ENCODE measurements at regions of chr1 and their contacts with region 1.

Region 1: GRCh38 chr1:53238197-53239155 is at the start of gene MAGOH:
- DNase-seq: peak; percentile 95
- ATAC-seq: peak; percentile 99
- H3K4me3 ChIP-seq: peak within 1 kb of the TSS; percentile 94 to 98 (median 98)
- H3K4me3 Mint-ChIP-seq: peak within 1 kb of the TSS; percentile 99
- H3K27ac ChIP-seq: peak within 1 kb of the TSS; percentile 70 to 89
- H3K27ac Mint-ChIP-seq: peak within 1 kb of the TSS; percentile 96
- H3K4me1 ChIP-seq: peaks cover 18 to 26% of the 10 kb centered on the region in 2 donors
- H3K4me1 Mint-ChIP-seq: peaks cover 29% of the 10 kb centered on the region
- H3K27me3 ChIP-seq: no peaks in the 10 kb centered on the region
- H3K27me3 Mint-ChIP-seq: no peaks in the 10 kb centered on the region
- CTCF ChIP-seq: no peak
- total RNA-seq, gene MAGOH: 36.2 and 45.6 TPM in 2 replicates

Region 2: DNA sequence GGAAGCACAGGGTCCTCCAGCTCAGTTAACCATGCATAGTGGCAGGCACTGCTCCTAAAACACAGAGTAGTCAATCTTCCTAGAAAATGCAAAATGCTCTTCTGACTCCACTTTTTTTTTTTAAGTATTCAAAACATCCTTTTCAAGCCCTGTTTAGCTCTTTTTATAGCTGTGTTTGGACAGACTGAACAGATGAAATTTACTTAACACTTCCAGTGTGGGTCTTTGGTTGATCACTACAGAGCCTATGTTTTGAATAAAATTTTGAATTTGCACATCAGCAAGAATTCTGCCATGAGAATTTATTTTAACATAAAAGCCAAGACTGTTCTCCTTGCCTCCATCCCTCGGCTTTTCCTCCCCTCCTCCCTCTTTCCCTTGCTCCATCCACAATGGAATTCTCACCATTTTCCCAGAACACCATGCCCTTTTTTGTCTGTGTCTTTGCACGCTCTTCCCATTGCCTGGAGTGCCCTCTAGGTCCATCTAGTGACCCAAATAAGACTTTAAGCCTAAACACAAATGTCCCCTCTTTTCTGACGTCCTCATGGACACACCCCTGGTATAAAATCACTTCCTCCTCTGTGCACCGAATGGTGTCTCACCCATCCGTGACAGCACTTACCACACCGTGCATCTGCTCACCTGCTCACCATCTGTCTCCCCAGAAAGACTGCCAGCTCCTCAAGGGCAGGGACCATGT is 65.9 kb before region 1 on chr1:
- CTCF ChIA-PET with region 1: no interaction called
- POLR2A ChIA-PET with region 1: no interaction called
- intact Hi-C with region 1: no loop called
- DNase-seq: peak; percentile 66
- ATAC-seq: peak; percentile 76
- H3K4me3 ChIP-seq: no peak overlapping the region
- H3K4me3 Mint-ChIP-seq: no peak overlapping the region
- H3K27ac ChIP-seq: no peak overlapping the region
- H3K27ac Mint-ChIP-seq: peak overlapping the region; percentile 22
- H3K4me1 ChIP-seq: peaks cover 6% of the 10 kb centered on the region in 2 donors
- H3K4me1 Mint-ChIP-seq: peaks cover 14% of the 10 kb centered on the region
- H3K27me3 ChIP-seq: peaks cover 0 to 10% (median 4%) of the 10 kb centered on the region in 4 experiments
- H3K27me3 Mint-ChIP-seq: peaks cover 22% of the 10 kb centered on the region
- CTCF ChIP-seq: no peak

Region 3: DNA sequence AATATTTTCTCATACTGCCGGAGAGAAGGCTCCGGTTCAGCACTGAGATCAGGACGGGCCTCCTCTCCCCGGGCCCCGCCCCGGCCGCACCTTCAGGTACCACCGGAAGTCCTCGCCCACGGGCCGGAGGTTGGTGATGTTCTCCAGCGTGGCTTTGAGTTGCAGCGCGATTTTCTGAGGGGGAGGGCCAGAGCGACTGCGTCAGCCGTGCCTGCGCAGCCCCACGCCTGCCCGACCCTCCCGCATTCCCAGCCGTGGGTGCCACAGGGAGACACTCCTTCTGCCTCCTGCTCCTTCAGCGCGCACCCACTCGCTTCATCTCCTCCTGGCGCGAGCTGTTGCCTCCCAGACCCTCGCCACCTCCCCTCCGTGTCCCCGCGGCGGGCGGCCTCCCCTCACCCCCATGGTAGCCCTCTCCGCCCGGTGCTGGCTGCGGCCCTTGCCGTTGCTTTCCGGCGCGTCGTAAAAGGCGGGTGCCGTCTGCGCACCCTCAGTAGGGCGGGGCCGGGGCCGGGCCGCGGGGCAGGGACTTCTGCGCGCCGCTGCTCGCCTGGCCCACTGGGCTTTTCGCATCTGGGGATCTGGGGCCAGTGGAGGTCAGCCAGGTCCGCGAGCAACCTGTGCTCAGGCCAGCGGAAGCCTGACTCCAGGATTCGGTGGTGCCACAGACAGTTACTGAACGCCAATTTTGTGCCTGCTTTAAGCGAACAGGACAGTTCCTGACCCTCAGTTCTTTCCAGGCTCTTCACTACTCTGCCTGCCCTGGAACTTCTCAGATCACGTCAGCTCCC is 18.1 kb before region 1 on chr1 and contains the start of gene CZIB:
- CTCF ChIA-PET with region 1: no interaction called
- POLR2A ChIA-PET with region 1: interaction called, 4 read pairs
- intact Hi-C with region 1: loop called (anchors 1 kb)
- DNase-seq: peak; percentile 96
- ATAC-seq: peak; percentile 92
- H3K4me3 ChIP-seq: peak within 1 kb of the TSS; percentile 43 to 91 (median 66)
- H3K4me3 Mint-ChIP-seq: peak within 1 kb of the TSS; percentile 97
- H3K27ac ChIP-seq: peak within 1 kb of the TSS; percentile 85 to 87
- H3K27ac Mint-ChIP-seq: peak within 1 kb of the TSS; percentile 99
- H3K4me1 ChIP-seq: peaks cover 13 to 17% of the 10 kb centered on the region in 2 donors
- H3K4me1 Mint-ChIP-seq: peaks cover 20% of the 10 kb centered on the region
- H3K27me3 ChIP-seq: no peaks in the 10 kb centered on the region
- H3K27me3 Mint-ChIP-seq: no peaks in the 10 kb centered on the region
- CTCF ChIP-seq: no peak
- total RNA-seq, gene CZIB: 62.0 and 62.1 TPM in 2 replicates

Region 4: DNA sequence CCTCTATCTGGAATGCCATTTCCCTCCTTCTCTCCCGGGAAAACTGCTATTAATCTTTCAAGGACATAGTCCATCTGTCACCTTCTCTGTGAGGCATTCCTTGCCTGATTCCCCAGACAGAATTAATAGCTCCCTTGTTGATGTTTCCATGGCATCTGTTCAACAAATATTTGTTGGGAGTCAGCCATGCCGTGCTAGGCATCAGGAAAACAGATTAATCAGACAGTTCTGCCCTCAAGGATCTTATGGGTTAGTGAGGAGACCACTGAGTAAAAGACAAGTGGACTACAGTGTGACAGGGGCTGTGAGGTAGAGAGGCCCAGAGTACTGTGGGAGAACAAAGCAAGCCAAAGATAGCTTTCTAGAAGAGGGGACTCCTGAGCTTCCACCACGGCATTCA is 11.2 kb after region 1 on chr1:
- CTCF ChIA-PET with region 1: no interaction called
- POLR2A ChIA-PET with region 1: no interaction called
- intact Hi-C with region 1: no loop called
- DNase-seq: no peak
- ATAC-seq: no peak
- H3K4me3 ChIP-seq: no peak overlapping the region
- H3K4me3 Mint-ChIP-seq: no peak overlapping the region
- H3K27ac ChIP-seq: no peak overlapping the region
- H3K27ac Mint-ChIP-seq: no peak overlapping the region
- H3K4me1 ChIP-seq: peaks cover 18 to 21% of the 10 kb centered on the region in 2 donors
- H3K4me1 Mint-ChIP-seq: peaks cover 28% of the 10 kb centered on the region
- H3K27me3 ChIP-seq: no peaks in the 10 kb centered on the region
- H3K27me3 Mint-ChIP-seq: no peaks in the 10 kb centered on the region
- CTCF ChIP-seq: no peak